Activated T-helper 1 cell treated with anti-CD3 and anti-CD28 coated beads, Interleukin-12 subunit alpha, Interleukin-12 subunit beta, Interleukin-2, Interleukin-4 antibody, amounts not matched to agents 30 ng/mL and 10 ng/mL and 1 ng/mL, durations not matched to agents 14 hours and 24 hours and 36 hours (primary cell): ENCODE measurements at regions of chr5 and their contacts with region 1.

Region 1: GRCh38 chr5:113606298-113607134 is 93.0 kb downstream of the YTHDC2 start:
- DNase-seq: peak; percentile 24
- H3K4me3 Mint-ChIP-seq: no peak overlapping the region
- H3K27ac Mint-ChIP-seq: no peak overlapping the region
- H3K4me1 Mint-ChIP-seq: peaks cover 4% of the 10 kb centered on the region
- H3K27me3 Mint-ChIP-seq: peaks cover 22% of the 10 kb centered on the region

Region 2: DNA sequence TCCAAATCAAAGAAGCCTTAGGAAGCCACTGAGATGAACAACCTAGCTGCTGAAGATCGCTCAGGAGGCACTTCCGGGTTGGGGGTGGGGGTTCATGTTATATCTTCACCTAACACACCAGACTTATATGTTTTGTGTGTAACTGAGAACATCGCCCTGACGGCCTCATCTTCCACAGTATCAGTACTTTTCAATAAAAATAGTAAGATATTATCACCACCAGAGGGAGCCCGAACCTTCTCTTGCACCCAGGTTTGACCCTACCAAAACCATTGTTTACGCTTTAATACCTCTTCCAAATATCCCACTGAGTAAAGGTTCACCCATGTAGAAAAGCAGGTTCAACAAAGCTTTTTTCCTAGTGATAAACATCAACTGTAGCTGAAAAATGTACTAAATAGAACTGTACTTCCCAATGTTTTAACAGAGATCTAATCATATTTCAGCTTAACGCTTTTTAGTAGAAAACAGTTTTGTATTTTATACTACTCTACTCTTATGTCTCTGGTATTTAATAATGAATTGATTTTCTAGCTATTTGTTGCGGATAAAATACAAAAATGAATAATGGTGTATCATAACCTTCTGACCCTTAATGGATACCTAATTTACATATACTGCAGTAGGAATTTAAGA is 1431.4 kb before region 1 on chr5:
- intact Hi-C with region 1: loop called (anchors 1 kb)
- DNase-seq: no peak
- H3K4me3 Mint-ChIP-seq: no peak overlapping the region
- H3K27ac Mint-ChIP-seq: no peak overlapping the region
- H3K4me1 Mint-ChIP-seq: no peaks in the 10 kb centered on the region
- H3K27me3 Mint-ChIP-seq: peaks cover 19% of the 10 kb centered on the region

Region 3: GRCh38 chr5:112757468-112758208 is 848.9 kb before region 1 on chr5:
- intact Hi-C with region 1: loop called (anchors 1 kb)
- DNase-seq: no peak
- H3K4me3 Mint-ChIP-seq: no peak overlapping the region
- H3K27ac Mint-ChIP-seq: no peak overlapping the region
- H3K4me1 Mint-ChIP-seq: peaks cover 4% of the 10 kb centered on the region
- H3K27me3 Mint-ChIP-seq: peaks cover 2% of the 10 kb centered on the region

Region 4: GRCh38 chr5:112995764-112996618 is 610.5 kb before region 1 on chr5:
- intact Hi-C with region 1: loop called (anchors 1 kb)
- DNase-seq: peak; percentile 61
- H3K4me3 Mint-ChIP-seq: no peak overlapping the region
- H3K27ac Mint-ChIP-seq: no peak overlapping the region
- H3K4me1 Mint-ChIP-seq: peaks cover 23% of the 10 kb centered on the region
- H3K27me3 Mint-ChIP-seq: no peaks in the 10 kb centered on the region

Region 5: DNA sequence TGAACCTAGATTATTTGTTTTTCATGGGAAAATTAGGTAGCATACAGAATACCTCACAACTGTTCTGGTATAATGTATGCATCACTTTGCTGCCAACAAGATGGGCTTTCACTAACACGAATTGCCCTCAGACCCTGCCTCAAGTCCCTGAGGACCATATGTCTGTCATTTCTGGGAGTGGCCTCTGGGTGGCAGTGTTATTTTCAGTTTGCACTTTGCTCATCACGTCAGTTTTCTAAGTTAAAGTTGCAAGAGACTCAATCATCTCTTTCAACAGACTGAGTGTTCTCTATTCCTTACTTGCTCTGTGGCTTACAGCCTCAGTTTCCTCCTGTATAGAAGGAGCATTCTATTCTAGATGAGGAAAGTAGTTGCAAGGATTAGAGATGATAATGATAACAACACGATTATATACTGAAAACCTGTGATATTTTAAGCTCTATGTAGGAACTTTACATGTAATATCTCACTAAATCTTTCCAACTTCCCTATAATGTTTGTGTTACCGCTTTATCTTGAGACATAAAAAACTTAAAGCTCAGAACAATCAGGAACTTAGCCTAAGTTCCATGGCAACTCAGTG is 227.5 kb before region 1 on chr5:
- intact Hi-C with region 1: loop called (anchors 1 kb)
- DNase-seq: peak; percentile 24
- H3K4me3 Mint-ChIP-seq: peak overlapping the region; percentile 24
- H3K27ac Mint-ChIP-seq: no peak overlapping the region
- H3K4me1 Mint-ChIP-seq: peaks cover 36% of the 10 kb centered on the region
- H3K27me3 Mint-ChIP-seq: peaks cover 21% of the 10 kb centered on the region

Region 6: DNA sequence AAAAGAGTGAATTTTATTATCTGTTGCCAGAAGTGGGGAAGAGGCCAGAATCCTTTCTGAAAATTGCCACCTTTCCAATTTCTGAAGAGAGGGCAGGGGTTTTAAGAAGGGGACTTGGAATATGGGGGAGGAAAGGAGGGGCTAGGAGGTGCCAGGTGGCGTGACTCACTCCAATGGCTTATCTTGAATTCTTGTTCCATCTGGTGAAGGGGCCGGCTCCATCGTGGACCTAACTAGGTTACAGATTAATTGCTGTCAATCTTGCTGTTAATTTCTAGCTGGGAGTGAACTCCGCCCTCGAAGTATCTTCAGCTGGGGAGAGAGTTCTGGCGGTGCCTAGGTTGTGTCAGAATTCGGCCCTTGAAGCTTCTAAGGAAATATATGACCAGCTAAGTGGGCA is 45.6 kb after region 1 on chr5:
- intact Hi-C with region 1: no loop called
- DNase-seq: no peak
- H3K4me3 Mint-ChIP-seq: no peak overlapping the region
- H3K27ac Mint-ChIP-seq: no peak overlapping the region
- H3K4me1 Mint-ChIP-seq: no peaks in the 10 kb centered on the region
- H3K27me3 Mint-ChIP-seq: peaks cover 7% of the 10 kb centered on the region